ENCODE measurements at regions of chr12 and their contacts with region 1.

Region 1: DNA sequence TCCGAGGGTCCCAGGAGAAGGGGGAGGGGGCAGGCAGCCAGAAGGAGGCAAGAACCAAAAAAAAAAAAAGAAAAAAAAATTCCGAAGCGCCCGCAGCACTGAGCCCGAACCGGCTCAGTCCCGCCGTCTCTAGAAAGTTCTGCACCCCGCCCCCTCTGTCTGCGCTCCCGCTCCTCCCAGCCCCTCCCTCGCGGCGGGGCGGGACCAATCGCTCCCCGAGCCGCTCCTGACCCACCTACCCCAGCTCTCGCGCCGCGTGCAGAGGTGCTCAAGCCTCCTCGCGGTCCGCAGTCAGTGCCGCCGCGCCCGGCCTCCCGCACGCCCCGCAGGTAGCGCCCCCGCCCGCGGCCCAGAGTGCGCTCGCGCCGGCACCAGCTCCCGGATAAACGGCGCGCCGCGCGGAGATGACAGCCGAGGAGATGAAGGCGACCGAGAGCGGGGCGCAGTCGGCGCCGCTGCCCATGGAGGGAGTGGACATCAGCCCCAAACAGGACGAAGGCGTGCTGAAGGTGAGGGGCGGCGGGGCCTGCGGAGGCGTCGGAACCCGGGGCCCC is at the start of gene FKBP4:
- DNase-seq: peak; percentile 82 to 99 (median 96)

Region 2: DNA sequence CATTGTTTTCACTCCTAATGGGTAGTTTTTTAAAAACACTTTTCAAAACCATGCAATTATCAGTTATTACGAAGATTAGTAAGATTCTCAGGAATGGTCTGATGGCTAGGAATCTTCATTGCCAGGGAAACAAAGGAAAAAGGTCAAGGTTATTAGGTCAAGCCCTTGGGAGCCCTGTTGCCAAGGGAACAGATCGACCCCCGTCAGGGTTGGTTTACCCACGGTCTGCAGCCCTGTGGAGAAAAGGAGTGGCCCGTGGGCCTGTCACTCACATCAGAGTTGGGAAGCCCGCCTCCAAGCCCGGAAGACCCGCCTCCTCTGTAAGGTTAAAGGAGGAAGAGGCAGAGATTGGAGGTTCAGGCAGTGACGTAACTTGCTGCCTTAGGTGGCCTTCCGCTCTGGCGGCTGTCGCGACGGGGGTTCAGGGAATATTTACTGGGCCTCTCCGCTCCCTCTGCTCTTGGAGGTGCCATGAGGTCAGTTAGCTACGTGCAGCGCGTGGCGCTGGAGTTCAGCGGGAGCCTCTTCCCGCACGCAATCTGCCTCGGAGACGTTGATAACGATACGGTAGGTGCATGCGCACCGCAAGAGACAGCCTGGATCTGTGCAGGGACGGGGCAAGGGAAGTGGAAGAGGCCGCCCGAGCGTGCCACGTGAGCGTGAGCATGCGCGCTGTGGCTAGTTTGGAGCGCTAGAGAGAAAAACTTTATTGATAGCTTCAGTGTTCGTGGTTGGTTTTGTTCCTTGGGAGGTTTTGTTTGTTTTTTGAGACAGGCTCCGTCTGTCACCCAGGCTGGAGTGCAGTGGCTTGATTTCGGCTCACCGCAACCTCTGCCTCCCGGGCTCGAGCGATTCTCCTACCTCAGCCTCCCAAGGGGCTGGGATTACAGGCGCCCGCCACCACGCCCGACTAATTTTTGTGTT is 17.7 kb after region 1 on chr12 and contains the start of gene ITFG2:
- intact Hi-C with region 1: loop called (anchors 2 kb)
- DNase-seq: peak; percentile 97 to 100 (median 99)